ENCODE measurements at regions of chr12 and their contacts with region 1.

Region 1: GRCh38 chr12:122123051-122123760 is 44.6 kb downstream of the MLXIP start:
- DNase-seq: peak; percentile 64 to 92
- H3K4me3 ChIP-seq: no peak overlapping the region
- CTCF ChIP-seq: peak in 1 of 3 donors; percentile 68
- POLR2A ChIP-seq: no peak

Region 2: DNA sequence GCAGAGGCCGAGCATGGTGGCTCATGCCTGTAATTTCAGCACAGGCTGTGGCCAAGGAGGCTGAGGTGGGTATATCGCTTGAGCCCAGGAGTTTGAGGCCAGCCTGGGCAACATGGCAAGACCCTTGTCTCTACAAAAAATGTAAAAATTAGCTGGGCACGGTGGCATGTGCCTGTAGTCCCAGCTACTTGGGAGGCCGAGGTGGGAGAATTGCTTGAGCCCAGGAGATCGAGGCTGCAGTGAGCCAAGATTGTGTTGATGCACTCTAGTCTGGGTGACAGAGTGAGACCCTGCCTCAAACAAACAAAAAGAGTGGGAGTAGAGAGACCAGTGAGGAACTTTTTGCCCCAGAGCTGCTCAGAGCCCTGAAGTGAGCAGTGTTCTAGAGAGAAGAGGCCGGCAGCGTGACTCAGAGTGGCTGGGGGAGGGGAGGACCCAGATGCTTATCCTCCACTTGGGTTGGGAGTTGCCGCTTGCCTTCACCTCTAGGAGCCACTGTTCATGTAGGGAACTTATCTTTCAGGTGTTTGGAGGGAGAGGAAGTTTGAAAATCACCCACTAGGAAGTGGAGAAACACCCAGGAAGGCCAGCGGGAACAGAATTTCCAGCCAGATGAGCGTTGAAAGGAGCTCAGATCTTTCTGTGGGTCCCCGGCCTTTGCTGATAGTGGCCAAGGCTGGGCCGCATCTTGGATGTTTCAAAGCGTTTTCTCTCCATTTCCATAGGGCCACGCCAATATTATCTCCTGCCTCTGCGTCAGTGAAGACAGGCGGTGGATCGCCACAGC is 189.5 kb before region 1 on chr12:
- intact Hi-C with region 1: loop called (anchors 10 kb)
- DNase-seq: no peak
- H3K4me3 ChIP-seq: no peak overlapping the region
- CTCF ChIP-seq: no peak
- POLR2A ChIP-seq: no peak

Region 3: GRCh38 chr12:122054842-122055520 is 68.2 kb before region 1 on chr12:
- intact Hi-C with region 1: loop called (anchors 2 kb)
- DNase-seq: no peak
- H3K4me3 ChIP-seq: no peak overlapping the region
- CTCF ChIP-seq: no peak
- POLR2A ChIP-seq: no peak

Measured in lower leg skin (tissue), 4 donors.